ENCODE measurements at regions of chr19 and their contacts with region 1.

Region 1: GRCh38 chr19:44002566-44003460 is at the start of gene ZNF230:
- DNase-seq: peak; percentile 84 to 93 (median 88)
- H3K4me3 ChIP-seq: peak within 1 kb of the TSS; percentile 84
- H3K27ac ChIP-seq: no peak within 1 kb of the TSS
- H3K4me1 ChIP-seq: peaks cover 8% of the 10 kb centered on the region
- H3K27me3 ChIP-seq: no peaks in the 10 kb centered on the region
- CTCF ChIP-seq: no peak
- EP300 ChIP-seq: no peak
- POLR2A ChIP-seq: peak; percentile 37
- total RNA-seq, gene ZNF230: 2.6 to 11.2 (median 4.4) TPM

Region 2: DNA sequence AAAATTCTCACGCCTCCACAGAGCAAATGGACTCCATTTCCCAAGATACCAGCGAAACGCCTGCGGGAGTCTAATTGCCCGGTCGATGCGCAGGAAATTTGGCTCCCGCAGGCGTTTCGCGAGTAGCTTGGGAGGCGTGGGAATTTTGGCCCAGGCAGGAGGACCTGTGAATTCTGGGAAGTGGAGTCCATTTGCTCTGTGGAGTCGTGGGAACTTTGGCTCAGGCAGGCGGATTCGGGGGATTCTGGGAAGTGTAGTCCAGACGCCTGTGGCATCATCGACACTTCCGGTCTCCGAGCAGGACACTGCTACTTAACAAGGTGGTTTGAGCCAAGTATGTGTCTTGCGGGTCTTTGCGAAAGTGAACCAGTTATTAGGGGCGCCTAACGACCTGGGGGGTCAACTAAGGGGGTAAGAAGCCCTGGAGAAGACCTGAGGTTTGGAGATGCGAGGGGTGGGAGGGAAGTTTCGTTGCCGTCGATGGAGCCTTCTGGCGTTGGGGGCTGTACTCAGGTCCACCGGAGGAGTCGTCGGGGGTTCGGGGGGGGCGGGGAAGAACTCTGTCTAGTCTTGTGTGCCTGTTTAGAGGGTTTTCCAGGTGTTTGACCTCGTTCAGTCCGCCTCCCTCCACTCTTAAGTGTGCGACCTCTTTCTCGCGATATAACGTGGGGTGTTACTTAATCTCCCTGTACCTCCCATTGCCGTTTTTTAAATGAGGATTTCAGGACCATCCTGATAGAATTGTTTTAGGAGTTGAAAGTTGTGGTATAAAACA is 18.7 kb before region 1 on chr19 and contains the start of gene ZNF155:
- intact Hi-C with region 1: loop called in 1 of 4 experiments (anchors 2 kb)
- DNase-seq: peak; percentile 88 to 92 (median 89)
- H3K4me3 ChIP-seq: peak within 1 kb of the TSS; percentile 71
- H3K27ac ChIP-seq: no peak within 1 kb of the TSS
- H3K4me1 ChIP-seq: no peaks in the 10 kb centered on the region
- H3K27me3 ChIP-seq: no peaks in the 10 kb centered on the region
- CTCF ChIP-seq: no peak
- EP300 ChIP-seq: no peak
- POLR2A ChIP-seq: peak; percentile 24
- total RNA-seq, gene ZNF155: 3.7 to 13.2 (median 10.7) TPM

Region 3: GRCh38 chr19:44032001-44032610 is 29.3 kb after region 1 on chr19:
- intact Hi-C with region 1: no loop called
- DNase-seq: no peak
- H3K4me3 ChIP-seq: no peak overlapping the region
- H3K27ac ChIP-seq: no peak overlapping the region
- H3K4me1 ChIP-seq: no peaks in the 10 kb centered on the region
- H3K27me3 ChIP-seq: no peaks in the 10 kb centered on the region
- CTCF ChIP-seq: no peak
- EP300 ChIP-seq: no peak
- POLR2A ChIP-seq: no peak

Measured in ovary (tissue), 10 donors.